Tibial artery (tissue), 4 donors: ENCODE measurements at regions of chr19 and their contacts with region 1.

Region 1: DNA sequence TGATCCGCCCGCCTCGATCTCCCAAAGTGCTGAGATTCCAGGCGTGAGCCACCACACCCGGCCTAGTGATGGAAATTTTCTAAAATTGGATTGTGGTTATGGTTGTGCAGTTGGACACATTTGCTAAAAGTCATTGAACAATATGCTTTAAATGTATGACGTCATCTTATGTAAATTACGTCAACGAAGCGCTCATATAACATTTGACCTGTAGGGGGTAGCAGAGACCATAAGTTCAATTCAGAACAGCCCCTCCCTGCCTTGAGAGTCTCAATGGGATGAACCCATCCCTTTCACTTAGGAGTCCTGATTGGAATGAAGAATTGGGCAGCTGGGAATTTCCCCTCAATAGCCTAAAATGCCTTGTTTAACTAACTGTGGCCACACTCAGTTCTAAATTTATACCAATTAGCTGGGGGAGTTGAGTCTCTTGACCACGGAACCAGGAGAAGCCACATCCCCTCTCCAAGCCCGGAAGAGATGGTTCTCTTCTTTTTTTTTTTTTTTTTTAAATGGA is 15.3 kb upstream of the TLE6 start:
- DNase-seq: peak in 1 of 2 donors; percentile 53
- H3K4me3 ChIP-seq: no peak overlapping the region
- H3K27ac ChIP-seq: no peak overlapping the region
- H3K4me1 ChIP-seq: no peaks in the 10 kb centered on the region
- H3K27me3 ChIP-seq: peaks cover 0 to 20% of the 10 kb centered on the region in 2 donors
- CTCF ChIP-seq: peak; percentile 65 to 96

Region 2: GRCh38 chr19:3116255-3116602 is 154.1 kb after region 1 on chr19:
- intact Hi-C with region 1: loop called (anchors 5 kb)
- DNase-seq: no peak
- H3K4me3 ChIP-seq: no peak overlapping the region
- H3K27ac ChIP-seq: no peak overlapping the region
- H3K4me1 ChIP-seq: peaks cover 0 to 9% (median 4%) of the 10 kb centered on the region in 4 donors
- H3K27me3 ChIP-seq: no peaks in the 10 kb centered on the region
- CTCF ChIP-seq: no peak

Region 3: GRCh38 chr19:3304871-3305423 is 342.8 kb after region 1 on chr19:
- intact Hi-C with region 1: loop called (anchors 5 kb)
- DNase-seq: peak; percentile 46 to 82
- H3K4me3 ChIP-seq: no peak overlapping the region
- H3K27ac ChIP-seq: no peak overlapping the region
- H3K4me1 ChIP-seq: peaks cover 0 to 11% (median 9%) of the 10 kb centered on the region in 4 donors
- H3K27me3 ChIP-seq: peaks cover 0 to 61% of the 10 kb centered on the region in 2 donors
- CTCF ChIP-seq: peak; percentile 92 to 93

Region 4: DNA sequence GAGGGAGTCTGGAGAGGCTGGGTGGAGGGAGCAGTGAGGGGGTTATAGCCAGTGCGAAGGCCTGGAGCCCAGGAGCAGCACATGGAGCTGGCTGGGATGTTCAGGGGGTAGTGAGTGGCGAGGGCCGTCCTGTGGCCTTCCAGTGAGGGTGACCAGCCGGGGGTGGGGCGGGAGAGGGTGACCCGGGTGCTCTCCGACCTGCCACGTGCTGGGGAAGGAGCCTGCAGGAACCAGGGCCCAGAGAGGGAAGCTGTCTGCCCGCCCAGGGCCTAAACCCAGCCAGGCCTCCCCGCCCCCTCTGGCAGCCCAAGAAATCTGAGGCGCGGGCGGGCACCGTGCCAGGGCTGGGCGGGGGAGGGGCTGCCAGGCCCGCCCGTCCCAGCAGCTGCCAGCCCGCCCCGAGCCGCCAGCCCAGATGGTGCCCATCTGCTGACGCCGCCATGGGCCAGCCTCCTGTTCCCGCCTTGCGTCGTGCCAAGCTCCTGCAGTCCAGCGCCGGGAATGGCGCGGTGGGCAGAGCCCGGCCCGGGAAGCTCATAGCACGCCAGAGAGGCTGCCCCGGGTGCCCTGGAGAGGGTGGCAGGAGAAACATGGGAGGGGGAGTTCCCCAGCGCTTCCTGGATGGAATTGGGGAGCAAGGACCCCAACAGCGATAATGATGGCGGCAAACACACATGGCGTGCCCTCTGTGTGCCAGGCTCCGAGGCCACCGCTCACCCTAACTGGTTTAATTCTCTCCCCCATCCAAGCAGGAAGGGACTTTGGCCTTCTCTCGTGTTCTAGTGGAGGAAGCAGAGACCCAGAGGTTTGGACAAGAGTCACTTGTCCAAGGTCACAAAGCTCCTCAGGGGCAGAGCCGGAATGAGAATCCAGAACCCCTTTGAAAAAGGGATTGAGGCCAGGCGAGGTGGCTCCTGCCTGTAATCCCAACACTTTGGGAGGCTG is 425.8 kb after region 1 on chr19:
- intact Hi-C with region 1: no loop called
- DNase-seq: peak; percentile 85 to 97
- H3K4me3 ChIP-seq: peak overlapping the region; percentile 12 to 34
- H3K27ac ChIP-seq: peak overlapping the region; percentile 86 to 100
- H3K4me1 ChIP-seq: peaks cover 4 to 94% (median 82%) of the 10 kb centered on the region in 4 donors
- H3K27me3 ChIP-seq: no peaks in the 10 kb centered on the region
- CTCF ChIP-seq: peak; percentile 6 to 37